HepG2 (cell line): ENCODE measurements at regions of chr2 and their contacts with region 1.

Region 1: DNA sequence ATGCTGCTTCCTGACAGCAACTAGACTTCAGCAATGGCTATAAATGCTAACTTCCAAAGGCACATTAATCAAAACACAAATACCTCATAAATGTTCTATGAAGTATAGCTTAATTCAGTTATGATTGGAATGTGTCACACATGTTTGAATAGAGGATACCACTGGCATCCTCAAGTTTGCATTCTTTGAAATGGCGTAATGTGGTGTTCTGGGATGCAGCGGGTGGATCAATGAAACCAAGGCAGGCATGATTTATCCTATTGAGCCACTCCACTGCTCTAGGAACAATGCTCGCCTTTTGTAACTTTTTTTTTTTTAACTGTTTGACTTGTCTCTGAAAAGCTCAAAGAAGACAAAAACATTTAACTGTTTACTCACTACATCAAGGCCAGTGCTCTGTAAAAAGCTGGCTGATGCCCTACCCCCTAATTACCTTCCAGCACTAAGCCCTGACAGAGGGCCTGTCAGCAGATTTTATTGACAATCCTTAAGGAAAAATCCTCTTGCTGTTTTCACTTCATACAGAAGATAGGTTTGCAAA is 278.8 kb upstream of the SESTD1 start:
- DNase-seq: peak; percentile 100
- ATAC-seq: peak; percentile 99
- H3K4me3 ChIP-seq: peak overlapping the region in 1 of 3 experiments; percentile 12; a peak in 1 of 6 replicates
- H3K27ac ChIP-seq: peak overlapping the region; percentile 88
- H3K4me1 ChIP-seq: peaks cover 54% of the 10 kb centered on the region
- H3K27me3 ChIP-seq: no peaks in the 10 kb centered on the region
- CTCF ChIP-seq: no peak
- EP300 ChIP-seq: peak; percentile 94 to 100; a peak in 3 of 4 replicates
- POLR2A ChIP-seq: no peak
- RAD21 ChIP-seq: peak; percentile 36

Region 2: DNA sequence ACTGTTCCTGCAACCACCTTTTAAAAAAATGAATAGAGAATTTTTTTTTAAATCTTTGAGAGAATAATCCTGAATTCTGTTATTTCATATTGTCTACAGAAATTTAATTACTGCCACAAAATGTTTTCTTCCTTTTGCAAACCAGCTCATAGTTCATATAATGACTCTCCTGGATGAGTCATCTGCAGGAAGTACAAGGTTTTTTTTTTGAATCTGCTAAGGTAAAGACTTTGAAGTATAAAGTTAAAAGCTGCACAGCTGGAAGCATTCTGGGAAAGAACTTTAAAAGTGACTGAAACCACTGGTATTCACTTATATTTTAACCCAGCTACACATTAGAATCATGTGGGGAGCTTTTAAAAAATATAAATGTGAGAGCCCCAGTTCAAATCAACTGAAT is 304.2 kb before region 1 on chr2:
- CTCF ChIA-PET with region 1: no interaction called
- POLR2A ChIA-PET with region 1: no interaction called
- in situ Hi-C with region 1: no loop called
- intact Hi-C with region 1: loop called (anchors 10 kb)
- DNase-seq: peak; percentile 88
- ATAC-seq: peak; percentile 75
- H3K4me3 ChIP-seq: peak overlapping the region in 2 of 3 experiments; percentile 12 to 24; a peak in 2 of 6 replicates
- H3K27ac ChIP-seq: peak overlapping the region; percentile 55
- H3K4me1 ChIP-seq: peaks cover 90% of the 10 kb centered on the region
- H3K27me3 ChIP-seq: no peaks in the 10 kb centered on the region
- CTCF ChIP-seq: no peak
- EP300 ChIP-seq: peak in 1 of 2 experiments; percentile 95; a peak in 2 of 4 replicates
- POLR2A ChIP-seq: no peak
- RAD21 ChIP-seq: no peak

Region 3: GRCh38 chr2:179272406-179273192 is 270.8 kb before region 1 on chr2:
- CTCF ChIA-PET with region 1: no interaction called
- POLR2A ChIA-PET with region 1: interaction called, 3 read pairs
- in situ Hi-C with region 1: loop called (anchors 5 kb)
- intact Hi-C with region 1: loop called (anchors 5 kb)
- DNase-seq: peak; percentile 96
- ATAC-seq: peak; percentile 84
- H3K4me3 ChIP-seq: peak overlapping the region; percentile 9 to 52 (median 52); a peak in 4 of 6 replicates
- H3K27ac ChIP-seq: peak overlapping the region; percentile 93
- H3K4me1 ChIP-seq: peaks cover 90% of the 10 kb centered on the region
- H3K27me3 ChIP-seq: no peaks in the 10 kb centered on the region
- CTCF ChIP-seq: no peak
- EP300 ChIP-seq: peak in 1 of 2 experiments; percentile 96; a peak in 2 of 4 replicates
- POLR2A ChIP-seq: no peak
- RAD21 ChIP-seq: no peak

Region 4: GRCh38 chr2:179487010-179487731 is 56.3 kb before region 1 on chr2:
- CTCF ChIA-PET with region 1: no interaction called
- POLR2A ChIA-PET with region 1: no interaction called
- in situ Hi-C with region 1: no loop called
- intact Hi-C with region 1: no loop called
- DNase-seq: no peak
- ATAC-seq: no peak
- H3K4me3 ChIP-seq: no peak overlapping the region
- H3K27ac ChIP-seq: no peak overlapping the region
- H3K4me1 ChIP-seq: no peaks in the 10 kb centered on the region
- H3K27me3 ChIP-seq: no peaks in the 10 kb centered on the region
- CTCF ChIP-seq: no peak
- EP300 ChIP-seq: no peak
- POLR2A ChIP-seq: no peak
- RAD21 ChIP-seq: no peak

Region 5: GRCh38 chr2:179532863-179533278 is 10.6 kb before region 1 on chr2:
- CTCF ChIA-PET with region 1: no interaction called
- POLR2A ChIA-PET with region 1: interaction called, 12 read pairs
- in situ Hi-C with region 1: no loop called
- intact Hi-C with region 1: loop called (anchors 2 kb)
- DNase-seq: peak; percentile 86
- ATAC-seq: peak; percentile 97
- H3K4me3 ChIP-seq: no peak overlapping the region
- H3K27ac ChIP-seq: peak overlapping the region; percentile 2
- H3K4me1 ChIP-seq: peaks cover 32% of the 10 kb centered on the region
- H3K27me3 ChIP-seq: no peaks in the 10 kb centered on the region
- CTCF ChIP-seq: no peak
- EP300 ChIP-seq: peak in 1 of 2 experiments; percentile 55; a peak in 1 of 4 replicates
- POLR2A ChIP-seq: no peak
- RAD21 ChIP-seq: no peak

Region 6: DNA sequence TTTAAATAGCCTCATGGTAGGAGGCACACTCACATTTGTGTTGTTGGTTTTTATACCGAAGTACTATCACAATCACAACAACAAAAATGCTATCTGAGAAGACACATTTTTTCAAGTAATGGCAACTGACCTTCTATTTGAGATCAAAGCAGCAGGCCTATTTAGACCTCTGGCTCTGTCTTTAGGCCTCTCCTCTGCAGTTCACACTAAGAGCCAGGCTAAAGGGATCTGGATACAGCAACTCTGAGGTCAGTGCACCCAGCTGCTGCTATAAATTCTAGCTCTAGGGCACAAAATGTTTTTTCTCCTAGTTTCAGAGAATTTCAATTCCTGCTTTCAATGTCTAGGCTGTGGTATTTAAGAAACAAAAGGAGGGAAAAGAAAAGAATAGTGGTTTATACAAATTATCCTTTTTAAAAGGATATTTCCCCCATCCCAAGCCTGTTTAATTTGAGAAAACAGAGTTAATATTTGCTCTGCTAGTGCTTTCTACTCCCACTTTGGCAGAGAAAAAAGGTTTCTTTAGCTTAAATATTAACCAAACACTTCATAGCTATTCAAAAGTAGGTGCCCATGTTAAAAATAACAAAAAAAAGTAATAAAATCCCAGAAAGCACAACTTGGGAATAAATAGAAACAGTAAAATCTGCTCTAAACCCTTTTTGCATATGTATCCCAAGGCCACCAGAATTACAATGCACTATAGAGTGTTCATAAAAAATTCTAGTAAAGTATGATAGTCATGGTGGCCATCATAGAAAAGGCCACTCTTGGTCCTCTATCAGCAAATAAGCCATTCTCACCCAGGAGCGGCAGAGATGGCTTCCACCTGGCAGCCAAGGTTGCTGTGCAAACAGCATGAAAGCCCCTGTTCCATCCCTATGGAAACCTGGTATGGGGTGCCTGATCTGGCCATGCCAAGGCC is 14.8 kb after region 1 on chr2:
- CTCF ChIA-PET with region 1: no interaction called
- POLR2A ChIA-PET with region 1: interaction called, 43 read pairs
- in situ Hi-C with region 1: no loop called
- intact Hi-C with region 1: loop called (anchors 2 kb)
- DNase-seq: peak; percentile 85
- ATAC-seq: peak; percentile 97
- H3K4me3 ChIP-seq: peak overlapping the region in 2 of 3 experiments; percentile 8 to 36; a peak in 2 of 6 replicates
- H3K27ac ChIP-seq: peak overlapping the region; percentile 84
- H3K4me1 ChIP-seq: peaks cover 69% of the 10 kb centered on the region
- H3K27me3 ChIP-seq: no peaks in the 10 kb centered on the region
- CTCF ChIP-seq: no peak
- EP300 ChIP-seq: peak in 1 of 2 experiments; percentile 67; a peak in 2 of 4 replicates
- POLR2A ChIP-seq: no peak
- RAD21 ChIP-seq: no peak

Region 7: DNA sequence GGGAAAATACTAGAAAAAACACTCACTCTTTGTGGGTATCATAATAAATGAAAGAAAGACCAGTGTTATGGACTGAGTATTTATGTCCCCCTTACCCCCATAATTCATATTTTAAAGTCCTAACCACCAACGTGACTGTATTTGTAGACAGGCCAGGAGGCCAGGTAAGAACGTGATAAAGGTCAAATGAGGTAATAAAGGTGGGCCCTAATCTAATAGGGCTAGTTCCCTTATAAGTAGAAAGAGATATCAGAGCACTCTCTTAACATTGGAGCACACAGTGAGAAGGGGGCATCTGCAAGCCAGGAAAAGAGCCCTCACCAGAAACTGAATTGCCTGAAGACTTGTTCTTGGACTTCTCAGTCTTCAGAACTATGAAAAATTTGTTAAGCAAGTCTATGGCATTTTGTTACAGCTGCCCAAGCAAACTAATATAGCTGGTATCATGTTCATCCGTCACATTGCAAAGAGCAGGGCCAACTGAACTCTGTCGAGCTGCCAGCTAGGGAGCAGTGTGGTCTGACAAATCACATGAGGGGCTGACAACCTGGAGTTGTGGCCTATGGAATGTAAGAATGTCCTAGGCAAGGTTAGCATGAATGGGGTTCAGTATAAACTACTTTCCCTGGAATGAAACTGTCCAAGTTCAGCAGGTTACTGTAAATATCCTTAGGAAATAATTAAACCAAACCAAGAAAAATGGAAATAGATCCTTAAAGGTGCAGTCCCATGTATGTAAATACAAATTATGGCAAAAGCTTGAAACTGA is 37.1 kb after region 1 on chr2:
- CTCF ChIA-PET with region 1: no interaction called
- POLR2A ChIA-PET with region 1: interaction called, 19 read pairs
- in situ Hi-C with region 1: no loop called
- intact Hi-C with region 1: loop called (anchors 1 kb)
- DNase-seq: peak; percentile 91
- ATAC-seq: peak; percentile 98
- H3K4me3 ChIP-seq: no peak overlapping the region
- H3K27ac ChIP-seq: peak overlapping the region; percentile 64
- H3K4me1 ChIP-seq: peaks cover 56% of the 10 kb centered on the region
- H3K27me3 ChIP-seq: no peaks in the 10 kb centered on the region
- CTCF ChIP-seq: peak; percentile 73
- EP300 ChIP-seq: peak in 1 of 2 experiments; percentile 65; a peak in 2 of 4 replicates
- POLR2A ChIP-seq: peak; percentile 41 to 74; a peak in 3 of 4 replicates
- RAD21 ChIP-seq: 0 out of 2 replicates have a peak, but pooled peaks have one; percentile 45

Region 8: DNA sequence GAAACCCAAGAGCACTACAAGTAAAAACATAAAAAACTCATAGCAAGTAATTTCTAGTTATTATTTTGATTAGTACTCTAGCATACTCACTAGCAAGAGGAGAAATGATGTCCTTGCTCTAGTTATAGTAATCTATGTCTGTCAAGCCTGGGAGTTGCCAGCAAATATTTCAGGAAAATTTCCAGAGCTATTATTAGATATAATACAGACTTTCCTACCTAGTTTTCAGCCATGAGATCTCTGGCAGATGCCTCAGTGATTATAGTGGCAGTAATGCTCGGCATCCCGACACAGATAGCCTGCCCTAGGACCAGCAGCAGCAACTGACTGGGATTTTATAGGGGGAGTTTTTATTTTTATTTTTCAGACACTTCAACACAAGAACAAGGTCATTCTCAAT is 93.6 kb after region 1 on chr2:
- CTCF ChIA-PET with region 1: no interaction called
- POLR2A ChIA-PET with region 1: interaction called, 3 read pairs
- in situ Hi-C with region 1: no loop called
- intact Hi-C with region 1: loop called (anchors 5 kb)
- DNase-seq: no peak
- ATAC-seq: no peak
- H3K4me3 ChIP-seq: no peak overlapping the region
- H3K27ac ChIP-seq: no peak overlapping the region
- H3K4me1 ChIP-seq: peaks cover 26% of the 10 kb centered on the region
- H3K27me3 ChIP-seq: no peaks in the 10 kb centered on the region
- CTCF ChIP-seq: no peak
- EP300 ChIP-seq: no peak
- POLR2A ChIP-seq: no peak
- RAD21 ChIP-seq: no peak

Region 9: DNA sequence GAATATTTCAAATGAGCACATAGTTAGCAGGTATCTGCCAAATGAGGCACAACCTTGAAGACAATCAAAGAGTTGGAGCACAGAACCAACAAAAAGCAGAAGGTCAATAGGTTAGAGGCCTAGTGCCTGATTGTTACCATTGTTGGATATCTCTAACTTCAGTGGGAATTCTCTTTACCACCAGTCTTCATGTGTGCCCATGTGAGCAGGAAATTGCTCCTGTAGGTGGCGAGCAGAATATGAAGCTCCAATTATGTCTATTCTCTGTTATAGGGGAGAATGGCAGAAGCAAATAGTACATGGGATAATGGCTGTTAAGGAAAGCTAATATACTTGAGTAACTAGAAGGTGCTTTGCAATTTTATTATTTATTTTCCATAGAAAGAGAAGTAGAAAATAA is 332.8 kb after region 1 on chr2:
- CTCF ChIA-PET with region 1: no interaction called
- POLR2A ChIA-PET with region 1: no interaction called
- in situ Hi-C with region 1: no loop called
- intact Hi-C with region 1: no loop called
- DNase-seq: peak; percentile 12
- ATAC-seq: peak; percentile 68
- H3K4me3 ChIP-seq: no peak overlapping the region
- H3K27ac ChIP-seq: no peak overlapping the region
- H3K4me1 ChIP-seq: no peaks in the 10 kb centered on the region
- H3K27me3 ChIP-seq: no peaks in the 10 kb centered on the region
- CTCF ChIP-seq: no peak
- EP300 ChIP-seq: no peak
- POLR2A ChIP-seq: no peak
- RAD21 ChIP-seq: no peak